A673 (cell line): ENCODE measurements at regions of chr4 and their contacts with region 1.

Region 1: GRCh38 chr4:137819964-137820383 is 287.7 kb upstream of the PCDH18 start:
- DNase-seq: peak; percentile 65
- H3K4me3 ChIP-seq: no peak overlapping the region
- H3K27ac ChIP-seq: no peak overlapping the region
- H3K4me1 ChIP-seq: no peaks in the 10 kb centered on the region
- H3K27me3 ChIP-seq: no peaks in the 10 kb centered on the region
- CTCF ChIP-seq: peak; percentile 77

Region 2: GRCh38 chr4:137775701-137776100 is 44.3 kb before region 1 on chr4:
- CTCF ChIA-PET with region 1: no interaction called
- POLR2A ChIA-PET with region 1: no interaction called
- intact Hi-C with region 1: no loop called
- DNase-seq: no peak
- H3K4me3 ChIP-seq: no peak overlapping the region
- H3K27ac ChIP-seq: no peak overlapping the region
- H3K4me1 ChIP-seq: peaks cover 4% of the 10 kb centered on the region
- H3K27me3 ChIP-seq: no peaks in the 10 kb centered on the region
- CTCF ChIP-seq: no peak

Region 3: GRCh38 chr4:138090150-138090917 is 270.4 kb after region 1 on chr4:
- CTCF ChIA-PET with region 1: interaction called, 8 read pairs
- POLR2A ChIA-PET with region 1: no interaction called
- intact Hi-C with region 1: loop called (anchors 2 kb)
- DNase-seq: peak; percentile 88
- H3K4me3 ChIP-seq: peak overlapping the region; percentile 38
- H3K27ac ChIP-seq: no peak overlapping the region
- H3K4me1 ChIP-seq: peaks cover 5% of the 10 kb centered on the region
- H3K27me3 ChIP-seq: no peaks in the 10 kb centered on the region
- CTCF ChIP-seq: peak; percentile 80

Region 4: GRCh38 chr4:138870737-138871554 is 1051.0 kb after region 1 on chr4:
- CTCF ChIA-PET with region 1: interaction called, 7 read pairs
- POLR2A ChIA-PET with region 1: no interaction called
- intact Hi-C with region 1: loop called (anchors 2 kb)
- DNase-seq: peak; percentile 85
- H3K4me3 ChIP-seq: no peak overlapping the region
- H3K27ac ChIP-seq: no peak overlapping the region
- H3K4me1 ChIP-seq: no peaks in the 10 kb centered on the region
- H3K27me3 ChIP-seq: no peaks in the 10 kb centered on the region
- CTCF ChIP-seq: peak; percentile 88